ENCODE measurements at regions of chr22 and their contacts with region 1.

Region 1: GRCh38 chr22:27804470-27805297 is 3.1 kb upstream of the MN1 start:
- DNase-seq: peak in 1 of 2 donors; percentile 70
- ATAC-seq: peak in 1 of 3 donors; percentile 41
- H3K4me3 ChIP-seq: no peak overlapping the region
- H3K4me3 Mint-ChIP-seq: peak overlapping the region; percentile 71
- H3K27ac ChIP-seq: no peak overlapping the region
- H3K27ac Mint-ChIP-seq: peak overlapping the region in 1 of 2 donors; percentile 42
- H3K4me1 ChIP-seq: peaks cover 21% of the 10 kb centered on the region
- H3K4me1 Mint-ChIP-seq: peaks cover 13 to 19% of the 10 kb centered on the region in 2 donors
- H3K27me3 ChIP-seq: peaks cover 7% of the 10 kb centered on the region
- H3K27me3 Mint-ChIP-seq: peaks cover 17 to 45% of the 10 kb centered on the region in 2 donors
- CTCF ChIP-seq: peak; percentile 19

Region 2: DNA sequence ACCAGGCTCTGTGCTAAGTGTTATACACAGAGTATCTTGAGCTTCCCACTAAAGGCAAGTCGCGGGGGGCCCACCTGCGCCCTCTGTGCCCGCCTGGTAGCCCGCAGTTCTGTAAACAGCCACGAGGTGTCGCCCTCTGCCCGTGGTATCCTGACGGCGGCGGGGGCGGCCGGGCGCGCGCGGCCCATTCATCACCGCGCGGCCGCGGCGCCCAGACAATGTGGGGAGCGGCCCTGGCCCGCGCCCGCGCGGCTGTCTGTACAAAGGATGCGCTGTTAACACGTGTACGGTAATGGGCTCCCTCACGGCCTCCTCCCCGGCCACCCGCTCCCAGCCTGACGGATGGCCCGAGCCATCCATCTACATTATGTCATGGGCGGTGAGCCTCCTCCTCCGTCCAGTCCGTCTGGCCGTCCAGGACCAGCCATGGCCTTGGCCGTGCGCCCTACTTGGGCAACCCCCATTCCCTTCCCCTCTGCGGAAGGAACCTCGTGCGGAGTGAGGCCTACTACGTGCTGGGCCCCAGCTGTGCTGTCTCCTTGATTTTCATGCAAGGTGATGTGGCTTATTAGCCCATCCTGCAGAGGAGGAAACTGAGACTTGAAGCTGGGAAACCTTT is 1047.9 kb before region 1 on chr22:
- intact Hi-C with region 1: loop called (anchors 10 kb)
- DNase-seq: peak; percentile 61 to 64
- ATAC-seq: peak; percentile 85 to 97 (median 94)
- H3K4me3 ChIP-seq: no peak overlapping the region
- H3K4me3 Mint-ChIP-seq: no peak overlapping the region
- H3K27ac ChIP-seq: no peak overlapping the region
- H3K27ac Mint-ChIP-seq: no peak overlapping the region
- H3K4me1 ChIP-seq: peaks cover 4% of the 10 kb centered on the region
- H3K4me1 Mint-ChIP-seq: peaks cover 10 to 41% of the 10 kb centered on the region in 2 donors
- H3K27me3 ChIP-seq: no peaks in the 10 kb centered on the region
- H3K27me3 Mint-ChIP-seq: no peaks in the 10 kb centered on the region
- CTCF ChIP-seq: peak; percentile 84

Region 3: GRCh38 chr22:27749597-27750225 is 55.0 kb before region 1 on chr22:
- intact Hi-C with region 1: no loop called
- DNase-seq: no peak
- ATAC-seq: no peak
- H3K4me3 ChIP-seq: no peak overlapping the region
- H3K4me3 Mint-ChIP-seq: no peak overlapping the region
- H3K27ac ChIP-seq: no peak overlapping the region
- H3K27ac Mint-ChIP-seq: no peak overlapping the region
- H3K4me1 ChIP-seq: peaks cover 13% of the 10 kb centered on the region
- H3K4me1 Mint-ChIP-seq: peaks cover 17 to 27% of the 10 kb centered on the region in 2 donors
- H3K27me3 ChIP-seq: no peaks in the 10 kb centered on the region
- H3K27me3 Mint-ChIP-seq: peaks cover 7 to 19% of the 10 kb centered on the region in 2 donors
- CTCF ChIP-seq: no peak